ENCODE measurements at regions of chr5 and their contacts with region 1.

Region 1: GRCh38 chr5:173573126-173573960 is 43.1 kb downstream of the BOD1 start:
- DNase-seq: peak; percentile 71 to 84
- ATAC-seq: peak; percentile 89 to 96 (median 94)
- H3K4me3 ChIP-seq: peak overlapping the region in 3 of 10 donors; percentile 18 to 30 (median 29)
- H3K27ac ChIP-seq: no peak overlapping the region
- H3K4me1 ChIP-seq: peaks cover 0 to 14% (median 5%) of the 10 kb centered on the region in 9 donors
- H3K27me3 ChIP-seq: peaks cover 0 to 10% (median 0%) of the 10 kb centered on the region in 7 donors
- CTCF ChIP-seq: peak; percentile 93 to 99 (median 97)

Region 2: GRCh38 chr5:173331956-173332479 is 241.3 kb before region 1 on chr5:
- intact Hi-C with region 1: loop called in 3 of 10 experiments (anchors 5 to 10 kb)
- DNase-seq: peak; percentile 83 to 85
- ATAC-seq: peak; percentile 77 to 88 (median 80)
- H3K4me3 ChIP-seq: no peak overlapping the region
- H3K27ac ChIP-seq: no peak overlapping the region
- H3K4me1 ChIP-seq: peaks cover 5 to 37% (median 29%) of the 10 kb centered on the region in 9 donors
- H3K27me3 ChIP-seq: peaks cover 0 to 61% (median 14%) of the 10 kb centered on the region in 7 donors
- CTCF ChIP-seq: peak; percentile 84 to 96 (median 93)

Region 3: GRCh38 chr5:173454754-173455614 is 118.4 kb before region 1 on chr5:
- intact Hi-C with region 1: loop called in 1 of 10 experiments (anchors 5 kb)
- DNase-seq: peak in 1 of 2 donors; percentile 20
- ATAC-seq: peak in 7 of 8 donors; percentile 42 to 77 (median 60)
- H3K4me3 ChIP-seq: no peak overlapping the region
- H3K27ac ChIP-seq: peak overlapping the region; percentile 7 to 77 (median 48)
- H3K4me1 ChIP-seq: peaks cover 0 to 56% (median 26%) of the 10 kb centered on the region in 9 donors
- H3K27me3 ChIP-seq: peaks cover 0 to 3% (median 0%) of the 10 kb centered on the region in 7 donors
- CTCF ChIP-seq: no peak

Region 4: DNA sequence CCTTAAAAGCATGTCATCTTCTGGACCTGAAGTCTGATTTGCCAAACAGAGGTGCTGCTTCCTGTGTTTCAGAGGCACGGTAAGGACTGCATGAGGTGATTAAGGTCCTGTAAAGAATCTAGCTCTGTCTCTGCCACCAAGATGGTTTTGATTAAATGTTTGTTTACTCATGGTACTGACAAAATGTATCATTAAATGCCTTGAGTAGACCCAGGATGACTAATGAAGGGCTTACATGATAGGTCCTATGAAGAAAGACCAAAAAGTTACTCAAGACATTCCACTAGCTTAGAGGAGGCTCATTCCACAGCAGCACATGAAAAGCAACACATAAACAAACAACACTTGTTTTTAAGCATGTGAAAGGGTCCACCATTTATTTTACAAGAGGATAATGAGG is 57.8 kb before region 1 on chr5:
- intact Hi-C with region 1: no loop called
- DNase-seq: no peak
- ATAC-seq: no peak
- H3K4me3 ChIP-seq: no peak overlapping the region
- H3K27ac ChIP-seq: no peak overlapping the region
- H3K4me1 ChIP-seq: no peaks in the 10 kb centered on the region
- H3K27me3 ChIP-seq: peaks cover 0 to 24% (median 0%) of the 10 kb centered on the region in 7 donors
- CTCF ChIP-seq: no peak

Region 5: GRCh38 chr5:173808134-173808808 is 234.9 kb after region 1 on chr5:
- intact Hi-C with region 1: no loop called
- DNase-seq: no peak
- ATAC-seq: peak in 2 of 8 donors; percentile 27 to 62
- H3K4me3 ChIP-seq: no peak overlapping the region
- H3K27ac ChIP-seq: no peak overlapping the region
- H3K4me1 ChIP-seq: peaks cover 0 to 22% (median 0%) of the 10 kb centered on the region in 9 donors
- H3K27me3 ChIP-seq: no peaks in the 10 kb centered on the region
- CTCF ChIP-seq: no peak